ENCODE measurements at regions of chr5 and their contacts with region 1.

Region 1: DNA sequence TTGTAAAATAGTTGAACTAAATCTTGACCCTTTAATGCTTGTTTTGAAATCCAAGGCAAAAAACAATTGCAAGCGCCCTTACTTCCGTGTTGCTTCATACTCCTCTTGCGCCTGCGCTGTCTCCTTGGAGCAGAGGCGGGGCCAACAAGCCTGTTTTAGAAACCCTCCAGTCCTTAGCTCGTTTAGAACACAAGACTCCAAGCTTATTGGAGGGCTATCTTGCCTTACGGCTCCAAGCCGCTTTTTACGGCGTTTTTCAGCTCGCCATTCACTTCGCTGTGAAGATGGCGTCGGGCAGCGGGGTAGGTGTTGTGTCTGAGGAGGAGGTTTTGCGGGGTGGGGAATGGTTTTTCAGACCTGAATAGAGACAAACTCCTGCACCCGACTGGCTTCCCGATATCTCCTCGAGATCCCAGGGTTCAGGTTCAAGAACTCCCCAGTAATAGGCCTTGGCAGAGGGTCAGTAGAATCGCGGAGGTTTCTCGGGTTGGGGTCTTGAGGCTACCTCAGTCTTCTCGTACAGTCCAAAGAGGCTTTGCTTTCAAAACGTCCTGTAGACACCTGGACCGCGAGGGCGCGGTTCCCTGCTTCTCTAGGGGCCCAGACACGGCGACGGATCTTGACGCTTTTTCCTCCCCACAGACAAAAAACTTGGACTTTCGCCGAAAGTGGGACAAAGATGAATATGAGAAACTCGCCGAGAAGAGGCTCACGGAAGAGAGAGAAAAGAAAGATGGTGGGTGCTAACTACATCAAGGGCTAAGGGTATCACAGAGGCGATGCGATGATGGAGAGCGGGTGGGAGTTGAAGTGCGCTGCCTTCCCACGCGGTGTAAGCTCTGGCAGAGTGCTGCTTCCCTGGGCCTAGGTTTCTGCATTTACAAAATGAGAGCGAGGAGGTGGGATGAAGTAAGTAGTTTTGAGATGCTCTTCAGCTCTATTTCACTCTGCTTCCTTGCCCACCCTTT is at the start of gene ZMAT2:
- DNase-seq: peak; percentile 76 to 97 (median 94)
- ATAC-seq: peak; percentile 97 to 99 (median 98)
- H3K4me3 ChIP-seq: peak within 1 kb of the TSS; percentile 68 to 99
- H3K4me3 Mint-ChIP-seq: peak within 1 kb of the TSS; percentile 97 to 100 (median 99)
- H3K27ac ChIP-seq: peak within 1 kb of the TSS; percentile 70
- H3K27ac Mint-ChIP-seq: peak within 1 kb of the TSS; percentile 96 to 97
- H3K4me1 ChIP-seq: peaks cover 14 to 15% of the 10 kb centered on the region in 2 experiments
- H3K4me1 Mint-ChIP-seq: peaks cover 27 to 31% (median 29%) of the 10 kb centered on the region in 3 donors
- H3K27me3 ChIP-seq: no peaks in the 10 kb centered on the region
- H3K27me3 Mint-ChIP-seq: no peaks in the 10 kb centered on the region
- total RNA-seq, gene ZMAT2: 39.9 to 59.5 (median 58.0) TPM

Region 2: DNA sequence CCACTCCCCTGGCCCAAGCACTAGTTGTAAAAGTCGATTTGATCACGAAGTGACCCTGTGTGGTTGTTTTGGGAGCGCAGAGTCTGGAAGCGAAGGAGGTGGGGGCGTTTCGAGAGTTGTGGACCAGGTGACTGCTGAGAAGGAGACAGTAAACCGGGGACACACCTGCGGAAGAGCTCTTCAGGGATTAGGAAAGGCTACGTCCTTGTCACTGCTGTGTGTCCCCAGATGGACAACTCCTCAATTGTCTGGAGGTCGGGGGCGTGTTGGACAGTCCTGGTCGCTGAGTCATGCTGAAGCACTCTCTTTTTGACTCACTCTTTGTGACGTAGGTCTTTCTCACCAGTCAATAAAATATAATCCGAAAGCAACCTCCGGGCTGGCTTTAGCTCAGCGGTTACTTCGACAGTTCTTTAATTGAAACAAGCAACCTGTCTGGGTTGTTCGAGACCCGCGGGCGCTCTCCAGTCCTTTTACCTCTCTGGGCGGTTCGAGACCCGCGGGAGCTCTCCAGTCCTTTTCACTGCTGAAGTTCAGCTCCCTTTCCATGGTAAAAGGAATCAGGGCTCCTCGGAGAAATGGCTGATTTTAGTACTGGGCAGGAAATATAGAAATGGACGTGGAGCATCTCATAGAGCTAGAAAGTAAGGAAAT is 10.6 kb after region 1 on chr5:
- CTCF ChIA-PET with region 1: interaction called in 1 of 2 experiments, 20 read pairs
- POLR2A ChIA-PET with region 1: interaction called, 4 to 23 read pairs
- DNase-seq: peak; percentile 63 to 93 (median 80)
- ATAC-seq: peak; percentile 85 to 89 (median 86)
- H3K4me3 ChIP-seq: peak overlapping the region; percentile 90 to 97
- H3K4me3 Mint-ChIP-seq: peak overlapping the region; percentile 98 to 99 (median 98)
- H3K27ac ChIP-seq: peak overlapping the region; percentile 90
- H3K27ac Mint-ChIP-seq: peak overlapping the region; percentile 99 to 100
- H3K4me1 ChIP-seq: peaks cover 2 to 10% of the 10 kb centered on the region in 2 experiments
- H3K4me1 Mint-ChIP-seq: peaks cover 18 to 37% (median 25%) of the 10 kb centered on the region in 3 donors
- H3K27me3 ChIP-seq: no peaks in the 10 kb centered on the region
- H3K27me3 Mint-ChIP-seq: peaks cover 0 to 6% of the 10 kb centered on the region in 2 donors

Measured in T-cell (primary cell).